ENCODE measurements at regions of chr11 and their contacts with region 1.

Region 1: DNA sequence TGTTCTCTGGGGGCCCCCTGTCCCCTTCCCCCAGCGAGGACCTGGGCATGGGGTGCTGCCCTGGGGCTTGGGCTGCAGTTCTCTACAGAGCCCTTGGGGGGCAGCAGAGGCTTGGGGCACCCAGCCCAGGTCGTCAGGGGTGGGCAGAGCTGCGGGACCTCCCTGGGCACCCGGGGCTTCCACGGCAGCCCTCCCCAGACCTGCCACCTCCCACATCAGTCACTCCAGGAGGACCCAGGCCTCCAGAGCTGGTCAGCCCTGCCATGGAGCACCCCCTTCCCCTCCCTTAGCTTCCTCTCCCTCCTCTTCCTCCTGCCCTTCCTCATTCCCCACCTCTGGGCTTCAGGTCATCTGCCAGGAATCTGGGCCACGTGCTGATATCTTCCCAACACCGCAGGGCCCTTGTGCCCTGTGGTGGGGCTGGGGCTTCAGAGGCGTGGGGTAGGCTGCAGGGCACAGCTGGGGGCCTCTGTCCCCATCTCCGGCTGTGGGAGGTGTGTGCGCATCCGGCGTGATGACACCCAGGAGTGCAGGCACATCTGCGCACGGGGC is 5.8 kb downstream of the TSPAN4 start:
- DNase-seq: peak in 1 of 2 donors; percentile 63
- ATAC-seq: peak in 1 of 8 donors; percentile 6
- H3K4me3 ChIP-seq: peak overlapping the region in 1 of 10 donors; percentile 12
- H3K27ac ChIP-seq: no peak overlapping the region
- H3K4me1 ChIP-seq: peaks cover 34 to 90% (median 61%) of the 10 kb centered on the region in 9 donors
- H3K27me3 ChIP-seq: peaks cover 0 to 28% (median 0%) of the 10 kb centered on the region in 7 donors
- CTCF ChIP-seq: peak; percentile 77 to 96 (median 87)

Region 2: GRCh38 chr11:548700-549603 is 299.5 kb before region 1 on chr11:
- intact Hi-C with region 1: no loop called
- DNase-seq: no peak
- ATAC-seq: no peak
- H3K4me3 ChIP-seq: no peak overlapping the region
- H3K27ac ChIP-seq: no peak overlapping the region
- H3K4me1 ChIP-seq: no peaks in the 10 kb centered on the region
- H3K27me3 ChIP-seq: peaks cover 9 to 43% (median 27%) of the 10 kb centered on the region in 7 donors
- CTCF ChIP-seq: no peak

Region 3: DNA sequence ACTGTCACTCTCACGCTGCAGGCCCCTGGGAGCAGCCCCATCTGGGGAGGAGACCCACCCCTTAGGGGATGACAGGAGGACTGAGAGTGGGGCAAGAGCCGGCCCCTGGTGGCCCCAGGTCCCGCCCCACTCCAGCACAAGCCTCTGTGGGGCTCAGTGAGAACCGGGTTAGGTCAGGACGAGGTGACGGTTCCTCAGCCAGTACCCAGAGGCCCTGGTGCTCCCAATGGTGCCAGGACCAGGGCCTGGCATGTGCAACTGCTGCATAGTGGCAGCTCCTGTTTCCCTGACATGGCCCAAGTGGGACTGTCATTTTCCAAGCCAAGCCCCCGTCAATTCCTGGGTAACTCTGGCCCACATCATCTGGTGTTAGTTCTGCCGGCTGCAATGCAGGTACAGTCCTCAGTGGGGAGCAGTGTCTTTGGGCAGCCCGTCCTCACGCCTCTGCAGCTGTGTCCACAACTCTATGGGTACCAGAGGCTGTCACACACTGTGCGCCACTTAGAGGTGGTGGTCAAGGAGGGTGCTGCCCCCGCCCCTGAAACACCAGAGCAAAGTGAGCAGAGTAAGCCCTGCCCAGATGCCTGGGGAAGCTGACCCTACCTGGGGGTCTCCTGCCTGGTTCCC is 46.2 kb after region 1 on chr11:
- intact Hi-C with region 1: no loop called
- DNase-seq: no peak
- ATAC-seq: no peak
- H3K4me3 ChIP-seq: no peak overlapping the region
- H3K27ac ChIP-seq: no peak overlapping the region
- H3K4me1 ChIP-seq: no peaks in the 10 kb centered on the region
- H3K27me3 ChIP-seq: no peaks in the 10 kb centered on the region
- CTCF ChIP-seq: no peak

Region 4: DNA sequence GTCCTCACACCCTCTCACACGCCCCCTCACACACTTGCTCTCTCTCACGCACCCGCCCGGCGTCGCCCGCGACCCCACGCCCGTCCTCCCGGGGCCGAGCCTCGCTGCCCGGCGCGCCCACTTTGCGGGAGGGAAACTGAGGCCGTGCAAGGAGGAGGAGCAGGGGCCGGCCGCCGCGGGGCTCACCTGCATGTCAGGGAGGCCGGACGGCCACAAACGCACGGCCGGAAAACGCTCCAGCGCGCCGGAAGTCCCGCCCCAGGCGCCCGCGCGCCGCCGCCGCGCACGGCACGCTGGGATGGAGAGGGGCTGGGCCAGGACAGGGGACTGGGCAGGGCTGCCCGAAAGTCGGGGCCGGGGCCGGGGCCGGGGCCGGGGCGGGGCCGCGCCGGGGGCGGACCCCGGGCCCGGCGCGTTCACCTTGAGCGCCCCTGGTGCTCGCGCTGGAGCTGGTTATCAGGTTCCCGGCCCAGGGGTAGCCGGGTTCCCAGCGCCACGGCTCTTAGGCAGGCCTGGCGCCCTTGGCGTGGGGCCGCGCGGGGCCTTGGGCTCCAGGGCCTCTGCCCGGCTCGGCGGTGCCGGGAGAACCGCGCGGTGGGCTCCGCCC is 62.2 kb after region 1 on chr11 and contains the start of gene CHID1:
- intact Hi-C with region 1: loop called in 2 of 10 experiments (anchors 5 kb)
- DNase-seq: peak; percentile 86 to 91
- ATAC-seq: peak; percentile 92 to 97 (median 95)
- H3K4me3 ChIP-seq: peak within 1 kb of the TSS; percentile 67 to 99 (median 90)
- H3K27ac ChIP-seq: peak within 1 kb of the TSS; percentile 72 to 99 (median 96)
- H3K4me1 ChIP-seq: peaks cover 0 to 24% (median 16%) of the 10 kb centered on the region in 9 donors
- H3K27me3 ChIP-seq: no peaks in the 10 kb centered on the region
- CTCF ChIP-seq: peak in 3 of 9 donors; percentile 16 to 31 (median 23)
- total RNA-seq, gene CHID1: 47.9 to 75.2 (median 62.4) TPM

Region 5: DNA sequence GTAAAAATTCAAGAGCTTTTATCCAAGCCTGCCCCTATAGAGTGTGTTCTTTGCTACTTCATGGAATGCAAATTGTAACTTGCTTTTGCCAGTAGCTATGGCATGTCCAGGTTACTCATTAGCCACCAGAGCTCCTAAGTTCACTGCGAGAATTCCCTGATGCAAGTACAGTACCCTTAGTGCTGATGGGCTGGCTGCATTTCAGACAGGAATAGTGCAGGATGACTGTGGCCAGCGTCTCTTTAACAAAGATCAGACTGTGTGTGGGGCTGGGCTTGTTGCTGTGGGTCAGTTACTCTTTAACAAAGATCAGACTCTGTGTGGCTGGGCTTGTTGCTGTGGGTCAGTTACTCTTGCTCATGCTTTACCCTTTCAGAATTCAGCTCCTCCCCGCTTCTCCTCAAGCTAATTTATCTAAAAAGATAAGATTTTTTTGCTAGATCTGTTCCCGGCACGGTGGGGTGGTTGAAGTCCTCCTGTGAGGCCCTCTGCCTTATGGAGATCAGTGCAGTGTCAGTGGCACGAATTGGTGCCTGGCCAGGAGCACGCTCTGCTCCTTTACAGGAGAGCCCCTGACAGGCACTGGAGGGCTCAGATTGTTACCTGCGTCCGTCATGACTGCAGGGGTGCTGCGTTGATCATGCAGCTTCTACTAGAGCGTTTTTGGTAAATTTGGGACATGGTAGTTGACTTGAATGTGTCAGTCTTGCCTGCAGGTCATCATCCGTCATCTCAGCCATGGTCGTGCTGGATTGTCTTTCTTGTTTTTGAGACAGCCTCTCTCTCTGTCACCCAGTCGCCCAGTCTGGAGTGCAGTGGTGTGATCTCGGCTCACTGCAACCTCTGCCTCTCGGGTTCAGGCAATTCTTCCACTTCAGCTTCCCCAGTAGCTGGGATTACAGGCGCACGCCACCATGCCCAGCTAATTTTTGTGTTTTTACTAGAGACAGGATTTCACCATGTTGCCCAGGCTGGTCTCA is 104.2 kb after region 1 on chr11:
- intact Hi-C with region 1: no loop called
- DNase-seq: no peak
- ATAC-seq: peak in 4 of 8 donors; percentile 34 to 64 (median 51)
- H3K4me3 ChIP-seq: no peak overlapping the region
- H3K27ac ChIP-seq: no peak overlapping the region
- H3K4me1 ChIP-seq: peaks cover 0 to 39% (median 17%) of the 10 kb centered on the region in 9 donors
- H3K27me3 ChIP-seq: no peaks in the 10 kb centered on the region
- CTCF ChIP-seq: no peak

Region 6: GRCh38 chr11:1238767-1239595 is 390.5 kb after region 1 on chr11:
- intact Hi-C with region 1: no loop called
- DNase-seq: no peak
- ATAC-seq: peak in 1 of 8 donors; percentile 19
- H3K4me3 ChIP-seq: no peak overlapping the region
- H3K27ac ChIP-seq: no peak overlapping the region
- H3K4me1 ChIP-seq: no peaks in the 10 kb centered on the region
- H3K27me3 ChIP-seq: no peaks in the 10 kb centered on the region
- CTCF ChIP-seq: no peak